GM12878 (cell line): ENCODE measurements at regions of chr2 and their contacts with region 1.

Region 1: DNA sequence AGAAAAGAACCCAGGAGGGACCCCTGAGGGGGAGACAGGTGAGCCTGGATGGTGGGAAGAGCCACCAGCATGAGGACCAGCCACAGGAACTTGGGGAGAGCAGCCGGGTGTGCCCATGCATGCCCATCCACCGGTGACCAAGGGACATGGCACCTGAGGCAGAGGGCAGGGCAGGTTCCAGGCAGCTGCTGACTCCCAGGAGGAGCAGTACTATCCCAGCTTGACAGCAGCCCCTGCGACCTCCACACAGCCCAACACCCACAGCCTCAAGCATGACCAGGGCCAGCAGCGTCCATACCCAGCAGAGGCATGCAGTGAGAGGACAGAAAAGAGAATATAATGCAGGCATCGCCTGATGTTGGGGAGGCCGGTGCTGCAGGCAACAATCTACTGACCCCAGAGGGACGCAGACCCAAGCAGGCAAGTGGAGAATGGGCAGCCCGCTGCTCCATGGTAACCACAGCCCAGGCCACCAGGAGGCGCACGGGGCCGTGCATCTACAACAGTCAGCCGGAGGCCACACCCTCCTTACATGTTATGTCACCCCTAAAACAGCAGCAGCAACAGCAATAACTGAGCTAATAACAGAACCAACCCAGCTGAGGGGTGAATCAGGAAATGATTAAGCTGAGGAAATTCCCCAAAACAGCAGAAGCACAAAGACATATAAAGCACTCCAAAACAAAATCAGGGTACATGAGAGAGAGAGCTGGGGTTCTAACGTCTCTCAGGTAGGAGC is 44.1 kb downstream of the ANKMY1 start:
- DNase-seq: peak; percentile 71
- ATAC-seq: peak; percentile 100
- H3K4me3 ChIP-seq: no peak overlapping the region
- H3K27ac ChIP-seq: peak overlapping the region; percentile 49
- H3K4me1 ChIP-seq: peaks cover 10% of the 10 kb centered on the region
- H3K27me3 ChIP-seq: no peaks in the 10 kb centered on the region
- CTCF ChIP-seq: peak; percentile 97 to 99 (median 98)
- EP300 ChIP-seq: no peak
- POLR2A ChIP-seq: no peak
- RAD21 ChIP-seq: peak; percentile 90

Region 2: GRCh38 chr2:240465268-240465764 is 48.4 kb before region 1 on chr2:
- CTCF ChIA-PET with region 1: no interaction called
- POLR2A ChIA-PET with region 1: no interaction called
- RAD21 ChIA-PET with region 1: no interaction called
- SMC1A ChIA-PET with region 1: no interaction called
- in situ Hi-C with region 1: no loop called
- intact Hi-C with region 1: no loop called
- DNase-seq: no peak
- ATAC-seq: no peak
- H3K4me3 ChIP-seq: no peak overlapping the region
- H3K27ac ChIP-seq: no peak overlapping the region
- H3K4me1 ChIP-seq: peaks cover under 1% of the 10 kb centered on the region; the same call in 1 of the 2 replicates
- H3K27me3 ChIP-seq: no peaks in the 10 kb centered on the region
- CTCF ChIP-seq: no peak
- EP300 ChIP-seq: no peak
- POLR2A ChIP-seq: no peak
- RAD21 ChIP-seq: no peak

Region 3: GRCh38 chr2:240551809-240552208 is 38.1 kb after region 1 on chr2:
- CTCF ChIA-PET with region 1: interaction called, 45 read pairs
- POLR2A ChIA-PET with region 1: interaction called, 4 read pairs
- RAD21 ChIA-PET with region 1: interaction called, 17 read pairs
- SMC1A ChIA-PET with region 1: interaction called, 12 read pairs
- in situ Hi-C with region 1: no loop called
- intact Hi-C with region 1: no loop called
- DNase-seq: no peak
- ATAC-seq: peak; percentile 73
- H3K4me3 ChIP-seq: no peak overlapping the region
- H3K27ac ChIP-seq: peak overlapping the region; percentile 46; the same call in 1 of the 2 replicates
- H3K4me1 ChIP-seq: peaks cover 15% of the 10 kb centered on the region; the same call in 1 of the 2 replicates
- H3K27me3 ChIP-seq: no peaks in the 10 kb centered on the region
- CTCF ChIP-seq: no peak
- EP300 ChIP-seq: no peak
- POLR2A ChIP-seq: no peak
- RAD21 ChIP-seq: no peak

Region 4: DNA sequence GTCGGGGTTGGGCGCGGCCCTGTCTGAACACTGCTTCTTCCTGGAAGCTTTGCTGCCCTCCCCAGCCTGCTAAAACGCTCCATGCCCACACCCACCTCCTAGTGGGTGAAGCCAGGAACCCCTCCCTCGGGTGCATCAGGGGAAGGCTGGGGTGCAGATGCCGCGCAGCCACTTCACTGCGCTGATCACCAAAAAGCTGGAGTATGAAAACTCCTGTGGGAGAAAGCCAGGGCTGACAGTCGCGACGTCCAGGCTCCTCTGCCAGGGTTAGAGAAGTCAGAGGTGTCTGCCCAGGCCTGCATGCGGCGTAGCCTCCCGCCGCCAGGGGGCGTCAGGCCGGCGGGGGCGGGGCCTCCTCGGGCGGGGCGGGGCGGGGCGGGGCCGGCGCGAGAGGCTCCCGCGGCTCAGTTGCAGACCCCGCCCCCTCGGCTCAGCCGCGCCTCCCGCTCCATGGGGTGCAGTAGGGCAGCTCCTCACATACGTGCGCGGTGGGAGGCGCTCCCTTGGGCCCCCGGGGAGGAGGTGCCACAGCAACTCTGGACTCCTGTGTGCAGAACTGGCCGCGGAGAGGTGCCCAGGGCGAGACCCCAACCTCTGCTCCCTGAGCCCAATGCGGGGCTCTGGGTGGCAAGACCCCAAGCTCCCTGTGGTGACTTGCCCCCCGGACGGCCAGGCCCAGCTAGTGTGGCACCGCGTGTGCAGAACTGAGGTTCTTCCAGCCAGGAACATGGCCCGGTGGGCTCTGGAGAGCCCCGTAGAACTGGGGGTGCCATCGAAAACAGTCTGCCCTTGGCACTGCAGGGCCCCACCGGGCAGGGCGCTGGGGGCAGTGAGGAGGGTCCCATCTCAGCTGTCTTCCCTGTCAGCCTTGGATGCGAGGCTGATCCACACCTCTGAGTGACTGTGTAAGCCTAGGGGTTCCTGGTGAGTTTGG is 52.8 kb after region 1 on chr2:
- CTCF ChIA-PET with region 1: interaction called, 45 read pairs
- POLR2A ChIA-PET with region 1: interaction called, 8 read pairs
- RAD21 ChIA-PET with region 1: interaction called, 29 read pairs
- SMC1A ChIA-PET with region 1: interaction called, 20 read pairs
- in situ Hi-C with region 1: no loop called
- intact Hi-C with region 1: loop called (anchors 5 kb)
- DNase-seq: peak; percentile 57
- ATAC-seq: peak; percentile 80
- H3K4me3 ChIP-seq: peak overlapping the region; percentile 77
- H3K27ac ChIP-seq: peak overlapping the region; percentile 97
- H3K4me1 ChIP-seq: peaks cover 51% of the 10 kb centered on the region
- H3K27me3 ChIP-seq: no peaks in the 10 kb centered on the region
- CTCF ChIP-seq: peak; percentile 57 to 85 (median 57)
- EP300 ChIP-seq: no peak
- POLR2A ChIP-seq: no peak
- RAD21 ChIP-seq: peak; percentile 22; the same call in 1 of the 2 replicates

Region 5: DNA sequence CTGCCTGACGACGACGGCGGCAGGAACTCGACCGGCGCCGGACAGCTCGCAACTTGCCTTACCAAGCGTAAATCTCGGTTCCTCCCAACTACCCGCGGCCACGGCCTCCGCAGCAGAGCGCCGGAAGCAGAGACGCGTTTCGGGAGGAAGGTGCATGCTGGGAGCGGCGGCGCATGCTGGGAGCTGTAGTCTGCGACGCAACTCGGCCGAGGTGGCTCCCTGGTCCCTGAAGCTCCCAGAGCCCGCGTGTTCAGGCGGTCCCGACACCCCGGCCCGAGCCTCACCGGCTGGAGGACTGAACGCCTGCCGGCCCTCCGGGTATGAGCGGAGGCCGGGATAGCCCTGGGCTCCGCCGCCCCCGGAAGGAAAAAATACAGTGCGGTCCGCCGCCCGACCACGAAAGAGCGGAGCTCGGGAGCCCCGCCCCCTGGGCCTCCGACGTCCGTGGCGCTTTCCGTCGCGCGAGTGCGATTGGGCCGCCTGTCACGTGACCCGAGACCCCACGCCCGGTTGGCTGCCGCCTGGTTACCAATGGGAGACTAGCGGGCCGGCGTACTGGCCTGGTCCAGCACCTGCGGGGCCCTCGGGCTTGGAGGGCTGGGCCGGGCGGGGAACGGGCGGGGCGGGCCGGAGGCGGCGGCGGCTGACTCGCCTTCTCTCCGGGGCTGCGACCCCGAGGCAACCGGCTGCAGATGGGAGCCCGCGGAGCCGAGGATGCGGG is 72.6 kb after region 1 on chr2 and contains the start of gene CAPN10:
- CTCF ChIA-PET with region 1: interaction called, 49 read pairs
- POLR2A ChIA-PET with region 1: interaction called, 9 read pairs
- RAD21 ChIA-PET with region 1: interaction called, 49 read pairs
- SMC1A ChIA-PET with region 1: interaction called, 23 read pairs
- in situ Hi-C with region 1: no loop called
- intact Hi-C with region 1: loop called (anchors 1 kb)
- DNase-seq: peak; percentile 73
- ATAC-seq: peak; percentile 79
- H3K4me3 ChIP-seq: peak within 1 kb of the TSS; percentile 95
- H3K27ac ChIP-seq: peak within 1 kb of the TSS; percentile 92
- H3K4me1 ChIP-seq: peaks cover 34% of the 10 kb centered on the region
- H3K27me3 ChIP-seq: no peaks in the 10 kb centered on the region
- CTCF ChIP-seq: no peak
- EP300 ChIP-seq: no peak
- POLR2A ChIP-seq: peak; percentile 95
- RAD21 ChIP-seq: no peak
- polyA plus RNA-seq, gene CAPN10: 0.37 to 1.6 TPM

Region 6: GRCh38 chr2:240596491-240596931 is 82.8 kb after region 1 on chr2:
- CTCF ChIA-PET with region 1: no interaction called
- POLR2A ChIA-PET with region 1: no interaction called
- RAD21 ChIA-PET with region 1: no interaction called
- SMC1A ChIA-PET with region 1: no interaction called
- in situ Hi-C with region 1: no loop called
- intact Hi-C with region 1: no loop called
- DNase-seq: no peak
- ATAC-seq: no peak
- H3K4me3 ChIP-seq: no peak overlapping the region
- H3K27ac ChIP-seq: no peak overlapping the region
- H3K4me1 ChIP-seq: no peaks in the 10 kb centered on the region; the same call in 1 of the 2 replicates
- H3K27me3 ChIP-seq: no peaks in the 10 kb centered on the region
- CTCF ChIP-seq: no peak
- EP300 ChIP-seq: no peak
- POLR2A ChIP-seq: no peak
- RAD21 ChIP-seq: no peak

Region 7: GRCh38 chr2:240704651-240705050 is 190.9 kb after region 1 on chr2:
- CTCF ChIA-PET with region 1: interaction called, 12 read pairs
- POLR2A ChIA-PET with region 1: no interaction called
- RAD21 ChIA-PET with region 1: interaction called, 6 read pairs
- SMC1A ChIA-PET with region 1: no interaction called
- in situ Hi-C with region 1: no loop called
- intact Hi-C with region 1: loop called (anchors 10 kb)
- DNase-seq: no peak
- ATAC-seq: no peak
- H3K4me3 ChIP-seq: no peak overlapping the region
- H3K27ac ChIP-seq: no peak overlapping the region
- H3K4me1 ChIP-seq: no peaks in the 10 kb centered on the region
- H3K27me3 ChIP-seq: peaks cover 0 to 2% of the 10 kb centered on the region in 2 experiments; a peak in 2 of 4 replicates
- CTCF ChIP-seq: no peak
- EP300 ChIP-seq: no peak
- POLR2A ChIP-seq: no peak
- RAD21 ChIP-seq: no peak

Region 8: DNA sequence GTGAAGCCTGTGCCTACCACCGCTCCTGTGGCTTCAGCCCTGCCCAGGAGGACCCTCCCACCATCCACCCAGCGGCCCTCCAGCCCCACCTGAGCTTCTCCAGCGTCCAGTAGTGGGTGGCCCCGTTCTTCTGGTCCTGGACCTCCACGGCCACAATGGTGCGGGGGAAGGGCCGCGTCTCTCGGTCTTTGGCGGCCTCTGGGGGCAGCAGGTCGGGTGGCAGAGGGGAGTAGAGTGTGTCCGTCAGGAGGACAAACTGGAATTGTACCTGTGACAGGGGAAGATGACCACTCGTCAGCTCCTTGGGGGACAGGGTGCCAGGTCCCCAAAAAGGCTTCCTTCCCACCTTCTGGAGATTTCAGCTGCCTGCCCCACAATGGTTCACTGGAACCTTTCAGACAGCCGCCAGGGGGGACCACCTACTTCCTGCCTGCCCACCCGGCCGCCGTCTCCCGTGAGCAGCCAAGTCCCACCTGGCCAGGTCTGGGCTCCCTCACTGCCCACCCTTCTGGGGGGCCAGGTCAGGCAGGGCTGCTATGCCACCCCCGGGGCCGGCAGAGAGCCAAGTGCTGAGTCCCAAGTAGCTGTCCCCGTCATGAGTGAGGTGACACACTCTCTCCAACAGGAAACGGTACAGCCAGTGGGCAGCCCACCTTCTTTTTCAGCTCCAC is 247.0 kb after region 1 on chr2:
- CTCF ChIA-PET with region 1: interaction called, 7 read pairs
- POLR2A ChIA-PET with region 1: no interaction called
- RAD21 ChIA-PET with region 1: interaction called, 10 read pairs
- SMC1A ChIA-PET with region 1: interaction called, 4 read pairs
- in situ Hi-C with region 1: no loop called
- intact Hi-C with region 1: no loop called
- DNase-seq: no peak
- ATAC-seq: 0 out of 3 replicates have a peak, but pooled peaks have one; percentile 18
- H3K4me3 ChIP-seq: no peak overlapping the region
- H3K27ac ChIP-seq: no peak overlapping the region
- H3K4me1 ChIP-seq: no peaks in the 10 kb centered on the region
- H3K27me3 ChIP-seq: no peaks in the 10 kb centered on the region
- CTCF ChIP-seq: peak in 2 of 3 experiments; percentile 9 to 18; a peak in 1 of 6 replicates
- EP300 ChIP-seq: no peak
- POLR2A ChIP-seq: no peak
- RAD21 ChIP-seq: 0 out of 2 replicates have a peak, but pooled peaks have one; percentile 15

Region 9: DNA sequence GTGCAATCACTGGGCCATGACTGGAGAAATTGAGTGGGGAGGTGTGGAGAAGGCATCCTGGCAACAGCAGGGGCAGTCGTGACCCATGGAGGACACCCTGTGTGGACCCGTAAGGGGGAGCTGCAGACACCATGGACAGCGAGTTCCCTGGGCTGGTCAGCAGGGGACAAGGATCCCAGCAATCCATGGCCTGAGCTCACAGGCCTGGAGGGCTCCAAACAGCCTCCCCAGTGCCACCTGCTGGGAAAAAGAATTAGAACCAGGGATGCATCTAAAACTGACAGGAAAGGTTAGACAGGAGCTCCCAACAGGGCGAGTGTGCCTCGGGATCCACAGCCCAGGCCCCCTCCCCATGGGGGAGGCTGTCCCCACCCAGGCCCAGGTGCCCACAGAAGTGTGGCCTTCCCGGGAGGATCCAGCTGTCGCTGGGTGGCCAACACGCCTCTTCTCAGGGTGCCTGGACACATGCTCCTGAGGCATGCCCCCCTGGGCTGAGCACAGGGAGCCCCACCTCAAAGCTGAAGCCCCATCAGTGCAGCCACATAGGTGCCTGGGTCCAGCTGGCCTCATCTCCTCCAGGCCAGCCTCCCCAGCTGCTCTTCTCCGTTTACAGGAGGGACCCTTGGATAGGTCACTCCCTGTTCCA is 326.8 kb after region 1 on chr2:
- CTCF ChIA-PET with region 1: interaction called, 31 read pairs
- POLR2A ChIA-PET with region 1: no interaction called
- RAD21 ChIA-PET with region 1: interaction called, 21 read pairs
- SMC1A ChIA-PET with region 1: interaction called, 11 read pairs
- in situ Hi-C with region 1: loop called (anchors 25 kb)
- intact Hi-C with region 1: loop called (anchors 1 kb)
- DNase-seq: no peak
- ATAC-seq: peak; percentile 66
- H3K4me3 ChIP-seq: no peak overlapping the region
- H3K27ac ChIP-seq: no peak overlapping the region
- H3K4me1 ChIP-seq: no peaks in the 10 kb centered on the region
- H3K27me3 ChIP-seq: no peaks in the 10 kb centered on the region; a peak in 2 of 4 replicates
- CTCF ChIP-seq: peak; percentile 48 to 54 (median 52); a peak in 5 of 6 replicates
- EP300 ChIP-seq: no peak
- POLR2A ChIP-seq: no peak
- RAD21 ChIP-seq: peak; percentile 57